Heart right ventricle (tissue), 16 donors: ENCODE measurements at regions of chr12 and their contacts with region 1.

Region 1: DNA sequence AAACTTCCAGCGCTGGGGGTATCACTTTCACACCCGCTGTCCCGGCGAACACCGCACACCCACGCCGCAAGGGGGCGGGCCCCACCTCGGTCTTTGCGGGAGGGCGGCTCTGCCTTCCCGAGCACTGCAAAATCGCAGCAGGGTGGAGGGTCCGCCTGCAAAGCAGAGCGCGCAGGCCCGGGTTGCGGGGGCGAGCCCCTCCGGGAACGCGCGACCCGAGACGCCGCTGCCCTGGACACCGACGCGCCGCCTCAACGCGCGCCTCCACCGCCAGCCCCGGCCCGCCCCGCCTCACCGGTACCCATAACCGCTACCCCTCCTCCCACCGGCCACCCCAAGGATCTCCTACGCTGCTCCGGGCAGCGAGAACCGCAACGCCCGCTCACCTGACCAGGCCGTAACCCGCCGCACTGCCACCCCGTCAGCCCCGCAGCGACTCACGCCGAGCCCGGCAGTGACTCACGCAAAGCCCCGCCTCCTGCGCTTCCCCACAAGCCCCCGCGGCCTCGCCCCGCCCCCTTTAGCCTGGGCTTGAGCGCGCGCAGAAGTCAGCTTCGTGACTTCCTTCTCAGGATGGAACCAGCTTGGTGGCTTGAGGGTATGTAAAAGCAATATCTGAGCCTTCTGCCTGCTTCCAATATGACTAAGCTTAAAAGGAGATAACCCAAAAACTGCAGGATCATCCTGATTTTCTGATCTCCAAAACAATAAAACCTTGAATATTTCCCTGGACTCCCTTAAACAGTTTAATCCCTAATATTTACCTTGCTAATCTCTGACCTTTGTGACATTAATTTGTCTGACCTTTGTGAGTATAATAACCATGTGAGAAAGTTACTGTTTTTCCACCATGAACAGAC is at the start of gene RPAP3:
- DNase-seq: peak; percentile 97
- ATAC-seq: peak; percentile 97 to 99 (median 98)
- H3K4me3 ChIP-seq: peak within 1 kb of the TSS; percentile 82 to 99 (median 94)
- H3K27ac ChIP-seq: peak within 1 kb of the TSS; percentile 50 to 91 (median 86)
- H3K4me1 ChIP-seq: peaks cover 3 to 50% (median 17%) of the 10 kb centered on the region in 9 donors
- H3K27me3 ChIP-seq: no peaks in the 10 kb centered on the region
- CTCF ChIP-seq: peak; percentile 59 to 81 (median 74)
- total RNA-seq, gene RPAP3: 18.6 to 28.0 (median 21.8) TPM

Region 2: DNA sequence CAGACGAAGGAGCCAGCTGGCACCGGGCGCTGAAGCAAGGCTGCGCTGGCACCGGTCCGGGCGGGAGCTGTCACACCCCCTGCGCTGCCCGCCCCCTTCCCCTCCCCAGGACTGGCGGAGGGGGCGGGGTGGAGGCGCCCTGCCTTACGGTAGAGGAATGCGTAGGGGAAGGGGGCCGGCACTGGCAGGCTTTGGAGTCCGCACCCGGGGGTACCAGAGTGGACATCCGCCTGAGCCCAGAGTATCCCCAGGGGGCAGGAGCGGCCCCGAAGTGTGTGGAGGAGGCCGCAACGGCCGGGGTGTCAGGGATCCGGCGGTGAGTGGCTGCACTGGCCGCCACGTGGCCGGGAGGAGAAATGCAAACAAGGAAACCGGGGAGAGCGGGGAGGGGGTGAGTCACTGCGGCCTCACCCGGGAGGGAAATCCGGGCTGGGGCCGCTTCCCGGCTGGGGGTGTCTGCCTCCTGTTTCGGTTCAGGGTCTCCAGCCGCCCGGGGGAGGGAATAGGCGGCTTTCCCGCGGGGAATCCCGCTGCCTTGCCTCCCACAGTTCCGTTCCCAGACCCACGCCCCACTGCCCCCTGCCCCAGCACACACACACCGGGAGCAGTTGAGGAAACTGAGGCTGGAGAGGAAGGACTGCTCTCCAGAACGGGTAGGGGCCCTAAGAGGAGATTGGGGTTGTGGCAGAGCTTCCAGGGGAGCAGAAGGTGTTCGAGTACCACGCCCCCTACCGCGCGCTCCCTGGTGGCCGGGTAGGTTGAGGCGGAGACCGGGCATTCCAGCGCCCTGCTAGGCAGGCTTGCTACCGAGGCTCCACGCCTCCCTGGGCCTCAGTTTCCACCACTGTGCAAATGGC is 53.3 kb after region 1 on chr12 and contains the start of gene RAPGEF3:
- intact Hi-C with region 1: no loop called
- DNase-seq: peak; percentile 89
- ATAC-seq: peak; percentile 87 to 92 (median 88)
- H3K4me3 ChIP-seq: peak within 1 kb of the TSS; percentile 34 to 78 (median 59)
- H3K27ac ChIP-seq: peak within 1 kb of the TSS; percentile 72 to 91 (median 86)
- H3K4me1 ChIP-seq: peaks cover 16 to 78% (median 58%) of the 10 kb centered on the region in 9 donors
- H3K27me3 ChIP-seq: no peaks in the 10 kb centered on the region
- CTCF ChIP-seq: peak; percentile 28 to 65 (median 50)
- total RNA-seq, gene RAPGEF3: 9.5 to 54.9 (median 19.8) TPM

Region 3: GRCh38 chr12:47882781-47883546 is 177.2 kb after region 1 on chr12:
- intact Hi-C with region 1: no loop called
- DNase-seq: no peak
- ATAC-seq: peak in 4 of 8 donors; percentile 30 to 36 (median 34)
- H3K4me3 ChIP-seq: peak overlapping the region in 1 of 10 donors; percentile 22
- H3K27ac ChIP-seq: peak overlapping the region in 1 of 10 donors; percentile 54
- H3K4me1 ChIP-seq: peaks cover 0 to 37% (median 0%) of the 10 kb centered on the region in 9 donors
- H3K27me3 ChIP-seq: peaks cover 0 to 8% (median 0%) of the 10 kb centered on the region in 7 donors
- CTCF ChIP-seq: no peak

Region 4: DNA sequence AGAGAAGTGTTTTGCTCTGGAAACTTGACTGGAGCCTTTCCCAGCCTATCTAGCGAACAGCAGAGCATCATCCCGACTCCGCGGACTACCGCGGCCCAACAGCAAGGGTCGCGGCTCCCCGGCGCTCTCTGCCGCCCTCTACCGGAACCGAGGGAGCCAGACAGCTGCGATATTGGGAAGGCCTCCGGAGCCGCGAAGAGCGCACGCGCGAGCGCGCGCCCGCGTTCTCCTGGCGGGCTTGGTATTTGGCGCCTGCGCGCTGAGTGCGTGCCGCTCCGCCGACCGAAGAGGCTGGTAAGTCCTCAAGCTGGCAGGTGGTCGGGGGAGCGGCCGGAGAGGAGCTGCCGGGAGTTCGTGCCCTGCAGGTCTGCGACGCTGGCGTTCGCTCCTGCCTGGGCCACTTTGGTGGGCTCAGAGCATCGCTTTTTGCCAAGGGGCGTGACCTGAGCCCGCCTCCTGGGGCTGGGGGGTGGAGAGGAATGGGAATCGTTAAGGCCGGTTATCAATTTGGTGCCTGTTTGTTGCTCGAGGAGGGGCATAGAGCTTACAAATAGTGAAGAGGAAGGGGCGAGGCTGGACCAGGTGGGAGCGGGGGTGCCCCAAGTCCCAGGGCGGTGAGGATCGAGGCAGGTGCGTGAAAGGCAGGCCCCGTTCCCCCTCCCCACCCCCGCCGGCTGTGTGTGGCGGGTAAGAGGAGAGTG is 257.7 kb after region 1 on chr12 and contains the start of gene TMEM106C:
- intact Hi-C with region 1: loop called in 3 of 10 experiments (anchors 2 to 10 kb)
- DNase-seq: peak; percentile 88 to 94
- ATAC-seq: peak; percentile 91 to 98 (median 96)
- H3K4me3 ChIP-seq: peak within 1 kb of the TSS; percentile 49 to 98 (median 84)
- H3K27ac ChIP-seq: peak within 1 kb of the TSS in 8 of 10 donors; percentile 28 to 76 (median 54)
- H3K4me1 ChIP-seq: peaks cover 0 to 49% (median 24%) of the 10 kb centered on the region in 9 donors
- H3K27me3 ChIP-seq: peaks cover 0 to 8% (median 0%) of the 10 kb centered on the region in 7 donors
- CTCF ChIP-seq: peak; percentile 94 to 100 (median 99)
- total RNA-seq, gene TMEM106C: 22.3 to 61.8 (median 40.0) TPM

Region 5: GRCh38 chr12:48061948-48062719 is 356.3 kb after region 1 on chr12:
- intact Hi-C with region 1: no loop called
- DNase-seq: no peak
- ATAC-seq: no peak
- H3K4me3 ChIP-seq: no peak overlapping the region
- H3K27ac ChIP-seq: no peak overlapping the region
- H3K4me1 ChIP-seq: no peaks in the 10 kb centered on the region
- H3K27me3 ChIP-seq: no peaks in the 10 kb centered on the region
- CTCF ChIP-seq: no peak

Region 6: GRCh38 chr12:48084066-48084465 is 378.3 kb after region 1 on chr12:
- intact Hi-C with region 1: loop called in 1 of 10 experiments (anchors 10 kb)
- DNase-seq: no peak
- ATAC-seq: peak in 3 of 8 donors; percentile 26 to 54 (median 51)
- H3K4me3 ChIP-seq: no peak overlapping the region
- H3K27ac ChIP-seq: no peak overlapping the region
- H3K4me1 ChIP-seq: peaks cover 0 to 1% (median 0%) of the 10 kb centered on the region in 9 donors
- H3K27me3 ChIP-seq: no peaks in the 10 kb centered on the region
- CTCF ChIP-seq: peak in 7 of 9 donors; percentile 25 to 64 (median 53)